Ascending aorta (tissue), 2 donors: ENCODE measurements at regions of chr21 and their contacts with region 1.

Region 1: DNA sequence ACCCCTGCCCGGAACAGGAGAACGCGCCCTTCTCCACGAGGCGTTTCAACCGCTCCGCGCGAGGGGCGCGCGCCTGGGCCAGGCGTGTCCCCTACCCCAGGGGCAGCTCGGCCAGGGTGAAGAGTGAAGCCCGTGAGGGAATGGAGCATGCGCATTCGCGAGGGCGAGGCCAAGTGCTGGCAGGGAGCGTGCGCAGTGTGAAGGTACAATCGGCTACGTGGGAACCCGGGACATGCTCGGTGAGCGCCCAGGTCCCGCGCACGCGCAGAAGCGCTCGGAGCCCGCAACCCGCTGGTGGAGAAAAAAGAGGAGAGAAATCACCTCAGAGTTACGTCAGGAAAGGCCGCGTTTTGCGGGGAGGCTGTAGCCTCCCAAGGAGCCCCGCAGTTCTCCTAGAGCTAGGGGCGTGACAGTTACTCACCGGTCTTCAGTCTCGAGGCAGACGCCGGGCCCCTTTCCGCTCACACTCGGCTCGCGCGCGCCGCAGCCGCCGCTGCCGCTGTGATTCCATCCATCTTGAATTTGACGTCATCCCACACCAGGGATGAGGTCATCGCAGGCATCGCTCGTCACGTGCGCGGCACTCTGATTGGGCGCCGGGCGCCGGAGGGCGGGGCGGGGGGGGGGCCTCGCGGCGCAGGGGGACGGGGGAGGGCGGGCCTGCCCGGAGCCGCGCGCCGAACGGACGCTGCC is at the start of gene ZBTB21:
- DNase-seq: peak; percentile 95 to 99
- H3K4me3 ChIP-seq: peak within 1 kb of the TSS; percentile 94 to 98
- H3K27ac ChIP-seq: peak within 1 kb of the TSS; percentile 96 to 97
- H3K4me1 ChIP-seq: peaks cover 0 to 5% of the 10 kb centered on the region in 2 donors
- H3K27me3 ChIP-seq: no peaks in the 10 kb centered on the region
- CTCF ChIP-seq: no peak
- total RNA-seq, gene ZBTB21: 11.1 TPM

Region 2: DNA sequence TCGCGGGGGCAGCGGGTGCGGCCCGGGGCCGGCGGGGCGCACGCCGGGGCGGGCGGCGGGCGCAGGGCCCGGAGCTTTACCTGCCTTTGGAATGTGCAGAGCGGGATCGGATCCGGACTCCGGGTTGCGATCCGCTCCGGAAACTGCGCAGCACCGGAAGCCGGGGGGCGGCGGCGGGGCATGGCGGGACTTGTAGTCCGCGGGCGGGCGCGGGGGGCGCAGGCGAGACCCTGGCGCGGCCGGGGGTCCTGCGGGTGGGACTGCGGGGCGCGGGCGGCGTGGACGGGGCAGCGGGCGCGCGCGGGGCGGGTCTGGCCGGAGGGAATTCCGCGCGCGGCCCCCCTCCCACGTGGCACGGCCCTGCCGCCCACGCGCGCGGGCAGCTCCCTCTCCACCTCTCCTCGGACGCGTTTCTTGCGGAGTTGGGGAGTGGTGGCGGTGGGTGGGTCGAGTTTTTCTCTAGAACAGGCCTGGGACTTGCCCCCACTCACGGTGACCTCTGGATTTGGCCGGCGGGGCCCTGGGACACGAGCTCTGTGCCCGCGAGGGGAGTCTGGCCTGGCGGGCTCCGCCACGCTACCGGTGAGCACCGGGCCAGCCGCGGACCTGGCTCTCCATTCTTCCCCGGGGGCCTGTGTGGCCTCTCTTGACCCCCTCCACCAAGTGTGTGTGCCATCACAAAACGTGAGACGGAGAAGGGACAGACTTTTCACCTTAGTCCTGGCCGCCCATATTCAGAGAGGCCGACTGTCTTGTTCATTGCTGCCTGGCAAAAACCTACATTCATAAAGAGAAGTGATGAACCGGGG is 130.6 kb before region 1 on chr21 and contains the start of gene PRDM15:
- intact Hi-C with region 1: loop called (anchors 2 kb)
- DNase-seq: peak in 1 of 2 donors; percentile 88
- H3K4me3 ChIP-seq: peak within 1 kb of the TSS; percentile 87 to 97
- H3K27ac ChIP-seq: peak within 1 kb of the TSS; percentile 73 to 81
- H3K4me1 ChIP-seq: peaks cover 0 to 2% of the 10 kb centered on the region in 2 donors
- H3K27me3 ChIP-seq: no peaks in the 10 kb centered on the region
- CTCF ChIP-seq: no peak
- total RNA-seq, gene PRDM15: 20.5 TPM

Region 3: GRCh38 chr21:41953831-41954653 is 55.9 kb before region 1 on chr21 and contains the start of gene C2CD2:
- intact Hi-C with region 1: loop called (anchors 1 kb)
- DNase-seq: peak in 1 of 2 donors; percentile 83
- H3K4me3 ChIP-seq: peak within 1 kb of the TSS; percentile 96 to 97
- H3K27ac ChIP-seq: peak within 1 kb of the TSS; percentile 86 to 90
- H3K4me1 ChIP-seq: peaks cover 14 to 29% of the 10 kb centered on the region in 2 donors
- H3K27me3 ChIP-seq: no peaks in the 10 kb centered on the region
- CTCF ChIP-seq: no peak
- total RNA-seq, gene C2CD2: 45.0 TPM

Region 4: GRCh38 chr21:42047821-42048613 is 38.0 kb after region 1 on chr21:
- intact Hi-C with region 1: loop called (anchors 2 kb)
- DNase-seq: peak; percentile 80 to 96
- H3K4me3 ChIP-seq: no peak overlapping the region
- H3K27ac ChIP-seq: peak overlapping the region; percentile 88 to 90
- H3K4me1 ChIP-seq: peaks cover 4 to 20% of the 10 kb centered on the region in 2 donors
- H3K27me3 ChIP-seq: no peaks in the 10 kb centered on the region
- CTCF ChIP-seq: peak in 2 of 3 experiments; percentile 8 to 27

Region 5: GRCh38 chr21:42097860-42098454 is 88.0 kb after region 1 on chr21:
- intact Hi-C with region 1: loop called (anchors 1 kb)
- DNase-seq: peak; percentile 82 to 93
- H3K4me3 ChIP-seq: peak overlapping the region in 1 of 2 donors; percentile 5
- H3K27ac ChIP-seq: peak overlapping the region; percentile 87 to 91
- H3K4me1 ChIP-seq: peaks cover 21 to 45% of the 10 kb centered on the region in 2 donors
- H3K27me3 ChIP-seq: no peaks in the 10 kb centered on the region
- CTCF ChIP-seq: no peak

Region 6: GRCh38 chr21:42125571-42126544 is 115.9 kb after region 1 on chr21:
- intact Hi-C with region 1: no loop called
- DNase-seq: no peak
- H3K4me3 ChIP-seq: no peak overlapping the region
- H3K27ac ChIP-seq: no peak overlapping the region
- H3K4me1 ChIP-seq: no peaks in the 10 kb centered on the region
- H3K27me3 ChIP-seq: no peaks in the 10 kb centered on the region
- CTCF ChIP-seq: no peak

Region 7: DNA sequence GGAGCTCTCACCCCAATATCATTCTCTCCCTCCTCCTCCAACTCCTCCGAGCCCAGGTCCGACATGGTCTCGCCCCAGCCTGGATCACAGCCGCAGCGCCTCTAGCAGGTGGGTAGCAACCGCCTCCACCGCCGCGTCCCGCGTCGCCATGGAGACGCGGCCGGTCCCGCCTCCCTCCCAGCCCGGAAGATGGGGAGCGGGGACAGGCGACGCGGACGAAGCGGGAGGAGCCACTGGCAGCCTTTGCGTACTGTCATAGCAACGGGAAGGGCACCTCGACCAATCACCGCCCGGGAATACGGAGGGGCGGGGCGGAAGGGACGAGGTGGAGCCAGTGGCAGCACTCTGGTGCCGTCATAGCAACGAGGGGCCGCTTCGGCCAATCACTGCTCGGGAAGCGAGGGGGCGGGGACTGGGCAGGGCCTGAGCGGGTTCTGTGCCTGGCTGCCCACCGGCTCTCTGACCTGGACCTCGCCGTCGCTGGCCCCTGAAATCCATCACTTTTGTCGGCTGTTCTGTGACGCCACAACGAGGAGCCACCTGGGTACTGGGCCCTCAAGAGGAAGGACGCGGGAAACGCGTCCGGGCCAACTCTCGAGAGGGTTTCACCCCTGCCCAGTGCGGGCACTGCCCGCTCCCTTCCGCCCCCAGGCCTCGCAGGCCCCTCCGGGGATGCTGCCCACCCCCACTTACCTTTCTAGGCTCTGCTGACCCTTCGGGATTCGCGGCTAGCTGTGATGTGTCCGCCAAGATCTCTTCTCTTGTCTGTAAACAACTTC is 486.3 kb after region 1 on chr21 and contains the start of gene RSPH1:
- intact Hi-C with region 1: loop called (anchors 2 kb)
- DNase-seq: peak; percentile 98 to 100
- H3K4me3 ChIP-seq: peak within 1 kb of the TSS; percentile 76 to 77
- H3K27ac ChIP-seq: peak within 1 kb of the TSS; percentile 64 to 76
- H3K4me1 ChIP-seq: no peaks in the 10 kb centered on the region
- H3K27me3 ChIP-seq: no peaks in the 10 kb centered on the region
- CTCF ChIP-seq: no peak
- total RNA-seq, gene RSPH1: not detected

Region 8: GRCh38 chr21:42695697-42696380 is 685.9 kb after region 1 on chr21:
- intact Hi-C with region 1: no loop called
- DNase-seq: no peak
- H3K4me3 ChIP-seq: no peak overlapping the region
- H3K27ac ChIP-seq: no peak overlapping the region
- H3K4me1 ChIP-seq: no peaks in the 10 kb centered on the region
- H3K27me3 ChIP-seq: no peaks in the 10 kb centered on the region
- CTCF ChIP-seq: no peak